IMR-90 (cell line): ENCODE measurements at regions of chr9 and their contacts with region 1.

Region 1: DNA sequence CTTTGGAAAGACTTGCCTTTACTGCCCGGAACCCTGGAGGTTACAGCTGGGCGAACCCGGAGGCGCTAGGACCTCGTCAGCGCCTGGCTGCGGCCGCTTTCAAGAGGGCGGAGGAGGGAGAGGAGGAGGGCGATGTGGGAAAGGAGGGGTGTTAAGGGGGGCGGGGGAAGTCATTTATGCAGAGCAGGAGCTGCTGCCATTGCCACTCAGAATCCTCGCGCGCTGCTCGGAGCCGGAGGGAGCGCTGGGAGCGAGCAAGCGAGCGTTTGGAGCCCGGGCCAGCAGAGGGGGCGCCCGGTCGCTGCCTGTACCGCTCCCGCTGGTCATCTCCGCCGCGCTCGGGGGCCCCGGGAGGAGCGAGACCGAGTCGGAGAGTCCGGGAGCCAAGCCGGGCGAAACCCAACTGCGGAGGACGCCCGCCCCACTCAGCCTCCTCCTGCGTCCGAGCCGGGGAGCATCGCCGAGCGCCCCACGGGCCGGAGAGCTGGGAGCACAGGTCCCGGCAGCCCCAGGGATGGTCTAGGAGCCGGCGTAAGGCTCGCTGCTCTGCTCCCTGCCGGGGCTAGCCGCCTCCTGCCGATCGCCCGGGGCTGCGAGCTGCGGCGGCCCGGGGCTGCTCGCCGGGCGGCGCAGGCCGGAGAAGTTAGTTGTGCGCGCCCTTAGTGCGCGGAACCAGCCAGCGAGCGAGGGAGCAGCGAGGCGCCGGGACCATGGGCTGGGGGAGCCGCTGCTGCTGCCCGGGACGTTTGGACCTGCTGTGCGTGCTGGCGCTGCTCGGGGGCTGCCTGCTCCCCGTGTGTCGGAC is at the start of gene PCSK5:
- DNase-seq: peak; percentile 89
- ATAC-seq: peak; percentile 86
- H3K4me3 ChIP-seq: peak within 1 kb of the TSS; percentile 64
- H3K27ac ChIP-seq: peak within 1 kb of the TSS; percentile 80
- H3K4me1 ChIP-seq: no peaks in the 10 kb centered on the region
- H3K27me3 ChIP-seq: no peaks in the 10 kb centered on the region
- CTCF ChIP-seq: peak; percentile 29
- POLR2A ChIP-seq: peak; percentile 78
- RAD21 ChIP-seq: peak; percentile 26; the same call in 1 of the 2 replicates
- total RNA-seq, gene PCSK5: 2.8 and 3.0 TPM in 2 replicates

Region 2: GRCh38 chr9:75844321-75844720 is 46.4 kb before region 1 on chr9:
- CTCF ChIA-PET with region 1: no interaction called
- POLR2A ChIA-PET with region 1: no interaction called
- dilution Hi-C with region 1: no loop called
- in situ Hi-C with region 1: no loop called
- intact Hi-C with region 1: no loop called
- DNase-seq: no peak
- ATAC-seq: no peak
- H3K4me3 ChIP-seq: no peak overlapping the region
- H3K27ac ChIP-seq: no peak overlapping the region
- H3K4me1 ChIP-seq: no peaks in the 10 kb centered on the region
- H3K27me3 ChIP-seq: no peaks in the 10 kb centered on the region
- CTCF ChIP-seq: no peak
- POLR2A ChIP-seq: no peak
- RAD21 ChIP-seq: no peak

Region 3: DNA sequence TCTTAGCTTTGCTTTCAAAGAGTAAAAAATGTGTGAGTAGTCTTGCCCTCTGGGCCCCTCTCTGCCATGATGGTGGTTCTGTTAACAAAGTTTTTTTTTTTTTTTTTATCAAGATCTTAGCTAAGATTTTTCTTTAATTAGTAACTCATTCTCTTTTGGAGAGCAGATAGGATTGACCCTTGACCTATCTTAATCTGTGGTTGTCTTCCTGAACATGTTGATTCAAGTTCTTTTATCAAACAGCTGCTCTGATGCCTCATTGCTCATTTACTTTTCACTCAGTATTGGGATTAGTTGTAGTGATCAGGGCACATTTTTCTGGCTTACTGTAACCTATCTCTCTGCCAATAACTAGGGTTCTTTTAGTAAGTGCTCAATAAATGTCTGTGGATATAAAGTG is 106.1 kb after region 1 on chr9:
- CTCF ChIA-PET with region 1: no interaction called
- POLR2A ChIA-PET with region 1: no interaction called
- dilution Hi-C with region 1: no loop called
- in situ Hi-C with region 1: no loop called
- intact Hi-C with region 1: loop called (anchors 5 kb)
- DNase-seq: no peak
- ATAC-seq: no peak
- H3K4me3 ChIP-seq: no peak overlapping the region
- H3K27ac ChIP-seq: no peak overlapping the region
- H3K4me1 ChIP-seq: no peaks in the 10 kb centered on the region
- H3K27me3 ChIP-seq: no peaks in the 10 kb centered on the region
- CTCF ChIP-seq: no peak
- POLR2A ChIP-seq: no peak
- RAD21 ChIP-seq: no peak

Region 4: GRCh38 chr9:76136986-76137385 is 246.3 kb after region 1 on chr9:
- CTCF ChIA-PET with region 1: no interaction called
- POLR2A ChIA-PET with region 1: no interaction called
- dilution Hi-C with region 1: no loop called
- in situ Hi-C with region 1: no loop called
- intact Hi-C with region 1: loop called (anchors 5 kb)
- DNase-seq: peak; percentile 81
- ATAC-seq: peak; percentile 95
- H3K4me3 ChIP-seq: no peak overlapping the region
- H3K27ac ChIP-seq: peak overlapping the region; percentile 98
- H3K4me1 ChIP-seq: peaks cover 6% of the 10 kb centered on the region
- H3K27me3 ChIP-seq: no peaks in the 10 kb centered on the region
- CTCF ChIP-seq: no peak
- POLR2A ChIP-seq: no peak
- RAD21 ChIP-seq: no peak

Region 5: DNA sequence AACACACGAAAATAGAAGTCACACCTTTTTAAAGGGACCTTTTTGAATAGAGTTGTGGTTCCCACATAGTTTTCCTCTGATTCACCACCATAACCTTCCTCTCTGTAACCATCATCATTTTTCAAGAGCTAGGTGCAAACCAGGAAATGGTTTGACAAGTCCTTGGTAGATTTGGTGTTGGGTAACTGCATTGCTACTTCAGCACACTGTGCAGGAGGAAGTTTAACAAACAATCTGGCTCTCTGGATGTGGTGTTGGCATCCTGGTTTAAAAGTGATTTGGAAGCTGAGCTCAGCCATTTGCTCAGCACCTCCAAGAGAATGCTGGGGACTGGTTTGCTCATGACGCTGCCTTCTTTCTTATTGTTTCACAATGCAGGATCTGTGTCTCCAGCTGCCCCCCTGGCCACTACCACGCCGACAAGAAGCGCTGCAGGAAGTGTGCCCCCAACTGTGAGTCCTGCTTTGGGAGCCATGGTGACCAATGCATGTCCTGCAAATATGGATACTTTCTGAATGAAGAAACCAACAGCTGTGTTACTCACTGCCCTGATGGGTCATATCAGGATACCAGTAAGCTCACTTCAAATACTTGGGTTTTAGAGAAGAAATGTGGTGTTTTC is 290.5 kb after region 1 on chr9:
- CTCF ChIA-PET with region 1: no interaction called
- POLR2A ChIA-PET with region 1: no interaction called
- dilution Hi-C with region 1: no loop called
- in situ Hi-C with region 1: no loop called
- intact Hi-C with region 1: loop called (anchors 5 kb)
- DNase-seq: peak; percentile 74
- ATAC-seq: peak; percentile 76
- H3K4me3 ChIP-seq: no peak overlapping the region
- H3K27ac ChIP-seq: peak overlapping the region; percentile 73
- H3K4me1 ChIP-seq: peaks cover 15% of the 10 kb centered on the region
- H3K27me3 ChIP-seq: no peaks in the 10 kb centered on the region
- CTCF ChIP-seq: no peak
- POLR2A ChIP-seq: no peak
- RAD21 ChIP-seq: no peak

Region 6: DNA sequence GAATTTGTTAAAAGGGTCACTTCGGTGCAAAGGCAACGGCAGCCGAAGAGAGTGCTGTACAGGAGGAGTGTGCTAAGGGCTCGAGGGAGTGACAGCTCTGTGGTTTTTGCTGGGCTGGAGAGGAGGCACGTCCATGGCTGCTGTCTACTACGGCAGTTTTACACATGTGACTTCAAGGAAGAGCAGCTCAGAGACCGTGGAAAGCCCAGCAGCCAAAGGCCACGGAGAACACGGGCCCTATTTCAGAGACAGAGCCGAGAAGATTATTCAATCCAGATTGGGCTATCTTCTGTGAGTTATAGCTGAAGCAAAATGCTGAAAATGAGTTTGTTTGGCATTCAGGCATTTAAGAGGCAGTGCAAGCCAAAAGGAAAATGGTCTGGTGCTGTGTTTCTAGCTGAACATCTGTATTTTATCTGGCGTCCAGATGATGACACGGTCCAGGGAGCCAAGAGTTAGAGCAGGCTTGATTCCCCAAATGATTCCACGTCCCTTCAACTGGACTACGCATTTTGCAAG is 407.1 kb after region 1 on chr9:
- CTCF ChIA-PET with region 1: interaction called, 4 read pairs
- POLR2A ChIA-PET with region 1: no interaction called
- dilution Hi-C with region 1: no loop called
- in situ Hi-C with region 1: loop called (anchors 10 kb)
- intact Hi-C with region 1: loop called (anchors 2 kb)
- DNase-seq: peak; percentile 33
- ATAC-seq: peak; percentile 73
- H3K4me3 ChIP-seq: no peak overlapping the region
- H3K27ac ChIP-seq: peak overlapping the region; percentile 38; the same call in 1 of the 2 replicates
- H3K4me1 ChIP-seq: peaks cover 10% of the 10 kb centered on the region
- H3K27me3 ChIP-seq: no peaks in the 10 kb centered on the region
- CTCF ChIP-seq: no peak
- POLR2A ChIP-seq: no peak
- RAD21 ChIP-seq: no peak

Region 7: GRCh38 chr9:76316069-76316468 is 425.4 kb after region 1 on chr9:
- CTCF ChIA-PET with region 1: no interaction called
- POLR2A ChIA-PET with region 1: interaction called, 17 read pairs
- dilution Hi-C with region 1: no loop called
- in situ Hi-C with region 1: no loop called
- intact Hi-C with region 1: no loop called
- DNase-seq: no peak
- ATAC-seq: no peak
- H3K4me3 ChIP-seq: no peak overlapping the region
- H3K27ac ChIP-seq: no peak overlapping the region
- H3K4me1 ChIP-seq: no peaks in the 10 kb centered on the region
- H3K27me3 ChIP-seq: no peaks in the 10 kb centered on the region
- CTCF ChIP-seq: no peak
- POLR2A ChIP-seq: no peak
- RAD21 ChIP-seq: no peak

Region 8: GRCh38 chr9:76393963-76394679 is 503.4 kb after region 1 on chr9 and contains the start of gene RFK:
- CTCF ChIA-PET with region 1: no interaction called
- POLR2A ChIA-PET with region 1: no interaction called
- dilution Hi-C with region 1: no loop called
- in situ Hi-C with region 1: no loop called
- intact Hi-C with region 1: loop called (anchors 5 kb)
- DNase-seq: peak; percentile 93
- ATAC-seq: peak; percentile 96
- H3K4me3 ChIP-seq: peak within 1 kb of the TSS; percentile 86
- H3K27ac ChIP-seq: peak within 1 kb of the TSS; percentile 92
- H3K4me1 ChIP-seq: peaks cover 2% of the 10 kb centered on the region
- H3K27me3 ChIP-seq: no peaks in the 10 kb centered on the region
- CTCF ChIP-seq: peak; percentile 54
- POLR2A ChIP-seq: peak; percentile 76
- RAD21 ChIP-seq: peak; percentile 53
- total RNA-seq, gene RFK: 13.8 and 29.2 TPM in 2 replicates